ENCODE measurements at regions of chr2 and their contacts with region 1.

Region 1: GRCh38 chr2:55268907-55269644 is at the start of gene MTIF2:
- DNase-seq: peak; percentile 87
- ATAC-seq: peak; percentile 99
- H3K4me3 ChIP-seq: peak within 1 kb of the TSS; percentile 89 to 95
- H3K27ac ChIP-seq: peak within 1 kb of the TSS; percentile 99
- H3K4me1 ChIP-seq: peaks cover 9% of the 10 kb centered on the region; the same call in 1 of the 2 replicates
- H3K27me3 ChIP-seq: no peaks in the 10 kb centered on the region
- CTCF ChIP-seq: no peak
- total RNA-seq, gene MTIF2: 34.1 TPM

Region 2: DNA sequence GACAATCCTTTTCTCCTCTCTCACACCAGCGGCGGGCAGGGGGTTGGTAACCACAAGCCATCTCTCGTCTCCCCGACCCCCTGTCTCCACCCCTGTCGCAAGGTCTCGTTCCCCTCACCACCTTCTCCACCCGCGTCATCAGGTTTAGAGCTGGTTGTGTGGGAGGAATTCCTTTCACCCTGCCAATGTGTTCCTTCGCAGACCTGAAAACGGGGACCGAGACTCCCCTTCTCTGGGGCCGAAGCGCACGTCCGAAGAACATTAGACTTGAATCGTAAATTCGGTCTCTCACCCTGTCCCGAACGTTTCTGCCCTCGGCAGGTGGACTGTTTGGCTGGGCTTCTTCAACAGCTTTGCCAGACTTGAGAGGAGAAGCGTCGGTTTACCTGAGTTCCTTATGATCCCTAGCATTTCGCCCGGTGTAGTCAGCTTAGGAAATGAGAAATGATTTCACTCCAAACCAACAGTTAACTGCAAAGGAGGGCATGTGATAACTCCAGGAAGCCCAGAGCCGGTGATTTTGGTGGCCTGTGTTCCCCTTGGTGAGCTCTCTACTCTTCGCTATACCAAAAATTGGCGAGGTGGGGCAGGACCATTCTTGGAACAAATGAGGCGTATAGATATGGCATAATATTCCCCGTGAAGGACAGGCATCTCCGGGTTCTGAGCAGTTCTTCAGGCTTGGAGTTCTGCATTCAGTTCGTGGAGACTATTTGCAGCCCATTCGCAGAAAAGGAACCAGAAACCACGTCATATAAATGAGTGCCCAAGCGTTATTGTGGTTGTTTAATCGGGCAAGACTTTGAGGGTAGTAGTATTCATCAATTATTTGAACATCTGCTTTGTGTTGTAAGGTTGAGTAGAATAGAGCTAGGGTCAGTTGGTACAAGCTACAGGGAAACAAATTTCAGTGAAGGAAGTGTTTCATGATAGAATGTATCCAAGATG is 251.1 kb after region 1 on chr2:
- CTCF ChIA-PET with region 1: no interaction called
- POLR2A ChIA-PET with region 1: interaction called, 15 read pairs
- in situ Hi-C with region 1: no loop called
- intact Hi-C with region 1: no loop called
- DNase-seq: no peak
- ATAC-seq: peak; percentile 54
- H3K4me3 ChIP-seq: peak overlapping the region; percentile 83 to 98
- H3K27ac ChIP-seq: peak overlapping the region; percentile 89
- H3K4me1 ChIP-seq: peaks cover 6% of the 10 kb centered on the region; the same call in 1 of the 2 replicates
- H3K27me3 ChIP-seq: no peaks in the 10 kb centered on the region
- CTCF ChIP-seq: no peak

Measured in Panc1 (cell line).